IMR-90 (cell line): ENCODE measurements at regions of chr20 and their contacts with region 1.

Region 1: DNA sequence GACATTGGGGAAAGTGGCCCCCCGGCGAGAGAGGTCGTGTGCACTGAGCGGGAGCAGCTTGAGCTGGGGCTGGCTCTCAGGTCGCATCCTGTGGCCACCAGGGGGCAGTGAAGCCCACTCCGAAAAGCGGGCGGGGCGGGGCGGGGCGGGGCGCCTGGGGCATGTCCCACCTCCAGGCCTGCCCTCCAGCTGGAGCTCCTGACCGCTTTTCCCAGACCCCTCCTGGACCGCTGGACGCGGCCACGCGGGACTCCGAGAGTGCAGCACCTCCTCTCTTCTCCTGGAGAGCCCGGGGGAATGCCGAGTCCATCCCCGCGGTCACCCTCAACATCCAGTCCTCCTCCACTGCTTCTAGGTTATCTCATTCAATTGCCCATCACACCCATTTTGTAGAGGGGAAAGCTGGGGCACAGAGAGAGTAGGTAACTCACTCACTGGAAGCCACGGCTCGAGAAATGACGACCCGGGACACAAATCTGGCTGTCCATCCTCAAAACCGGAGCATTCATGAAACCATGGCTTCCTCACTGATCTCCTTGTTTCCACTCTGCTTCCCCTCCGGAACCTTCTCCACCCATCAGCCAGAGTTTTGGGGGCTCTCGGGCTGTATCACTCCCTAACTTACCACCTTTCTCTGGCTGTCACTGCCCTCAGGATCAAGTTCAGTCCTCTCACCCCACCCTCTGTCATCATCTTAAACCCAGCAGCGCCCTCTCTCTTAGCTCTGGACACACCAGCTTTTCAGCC is 24.1 kb downstream of the COX4I2 start:
- DNase-seq: peak; percentile 54
- ATAC-seq: peak; percentile 85
- H3K4me3 ChIP-seq: peak overlapping the region; percentile 43
- H3K27ac ChIP-seq: peak overlapping the region; percentile 56
- H3K4me1 ChIP-seq: peaks cover 17% of the 10 kb centered on the region
- H3K27me3 ChIP-seq: no peaks in the 10 kb centered on the region
- CTCF ChIP-seq: peak; percentile 69
- POLR2A ChIP-seq: no peak
- RAD21 ChIP-seq: peak; percentile 63

Region 2: GRCh38 chr20:31547017-31547675 is 114.7 kb before region 1 on chr20:
- CTCF ChIA-PET with region 1: no interaction called
- POLR2A ChIA-PET with region 1: no interaction called
- dilution Hi-C with region 1: no loop called
- in situ Hi-C with region 1: no loop called
- intact Hi-C with region 1: no loop called
- DNase-seq: peak; percentile 92
- ATAC-seq: peak; percentile 27
- H3K4me3 ChIP-seq: peak overlapping the region; percentile 71
- H3K27ac ChIP-seq: peak overlapping the region; percentile 84
- H3K4me1 ChIP-seq: peaks cover 12% of the 10 kb centered on the region
- H3K27me3 ChIP-seq: no peaks in the 10 kb centered on the region
- CTCF ChIP-seq: no peak
- POLR2A ChIP-seq: peak; percentile 63
- RAD21 ChIP-seq: no peak

Region 3: DNA sequence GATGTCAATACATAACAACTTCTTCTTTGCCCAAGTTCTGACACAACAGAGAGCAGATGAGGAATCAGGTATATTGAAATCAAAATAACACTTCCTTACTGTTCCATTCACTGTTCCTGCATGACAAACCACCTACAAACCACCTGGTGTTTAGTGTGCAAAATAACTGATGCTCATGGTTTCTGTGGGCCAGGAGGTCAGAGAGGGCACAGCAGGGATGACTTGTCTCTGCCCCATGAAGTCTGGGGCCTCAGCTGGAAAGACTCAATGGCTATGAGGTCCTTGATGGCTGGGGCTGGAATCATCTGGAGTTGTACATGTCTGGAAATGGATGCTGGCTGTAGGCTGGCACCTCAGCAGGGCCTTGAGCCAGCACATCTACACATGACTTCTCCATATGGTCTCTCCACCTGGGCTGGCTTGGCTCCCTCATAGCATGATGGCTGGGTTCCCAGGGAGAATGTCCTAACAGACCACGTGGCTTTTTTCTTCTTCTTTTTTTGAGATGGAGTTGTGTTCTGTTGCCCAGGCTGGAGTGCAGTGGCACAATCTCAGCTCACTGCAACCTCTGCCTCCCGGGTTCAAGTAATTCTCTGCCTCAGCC is 31.5 kb before region 1 on chr20:
- CTCF ChIA-PET with region 1: interaction called, 12 read pairs
- POLR2A ChIA-PET with region 1: no interaction called
- dilution Hi-C with region 1: no loop called
- in situ Hi-C with region 1: no loop called
- intact Hi-C with region 1: no loop called
- DNase-seq: no peak
- ATAC-seq: no peak
- H3K4me3 ChIP-seq: no peak overlapping the region
- H3K27ac ChIP-seq: no peak overlapping the region
- H3K4me1 ChIP-seq: peaks cover 11% of the 10 kb centered on the region; the same call in 1 of the 2 replicates
- H3K27me3 ChIP-seq: no peaks in the 10 kb centered on the region
- CTCF ChIP-seq: no peak
- POLR2A ChIP-seq: no peak
- RAD21 ChIP-seq: no peak

Region 4: DNA sequence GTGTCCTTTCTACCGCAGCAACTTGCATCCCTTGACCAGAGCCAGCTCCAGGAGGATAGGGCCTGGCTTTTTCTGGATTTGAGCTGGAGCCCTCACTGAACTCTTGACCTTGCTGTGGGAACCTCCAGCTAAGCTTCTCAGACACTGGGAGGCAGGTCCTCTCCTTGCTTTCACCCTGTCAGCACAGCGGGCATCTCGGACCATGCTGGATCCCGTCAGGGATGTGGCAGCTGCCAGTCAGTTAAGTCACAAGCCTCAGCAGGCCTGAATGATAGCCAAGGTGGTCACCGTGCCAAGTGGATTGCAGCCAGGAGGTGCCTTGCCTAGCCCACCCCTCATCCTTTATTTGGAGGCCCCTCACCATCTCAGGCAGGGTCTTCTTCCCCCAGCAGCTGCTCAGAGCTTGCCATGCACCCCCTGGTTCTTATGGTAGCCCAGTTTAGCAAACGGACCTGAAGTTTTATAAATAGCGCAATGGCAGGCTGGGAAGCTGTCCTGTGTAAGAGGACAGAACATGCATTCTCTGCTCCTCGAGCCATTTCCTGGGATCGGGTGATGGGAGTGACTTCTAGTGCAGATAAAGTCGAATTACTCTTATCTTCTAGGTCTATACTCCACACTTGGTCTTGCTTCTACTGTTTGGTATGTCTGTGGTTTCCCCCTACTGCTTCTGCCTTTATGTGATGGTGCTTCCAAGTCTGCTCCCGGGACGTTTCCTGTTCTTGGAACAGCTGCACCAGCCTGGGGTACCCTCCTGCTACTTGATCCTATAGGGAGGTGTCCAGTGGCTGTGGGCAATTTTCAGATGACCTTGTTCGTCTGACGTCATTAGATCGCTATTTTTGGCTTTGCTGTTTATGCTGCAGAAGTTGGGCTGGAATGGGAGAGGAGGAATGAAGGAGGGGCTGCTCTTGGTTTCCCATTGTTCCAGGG is 150.3 kb after region 1 on chr20:
- CTCF ChIA-PET with region 1: no interaction called
- POLR2A ChIA-PET with region 1: interaction called, 9 read pairs
- dilution Hi-C with region 1: no loop called
- in situ Hi-C with region 1: no loop called
- intact Hi-C with region 1: loop called (anchors 1 kb)
- DNase-seq: peak; percentile 96
- ATAC-seq: peak; percentile 87
- H3K4me3 ChIP-seq: no peak overlapping the region
- H3K27ac ChIP-seq: peak overlapping the region; percentile 11; the same call in 1 of the 2 replicates
- H3K4me1 ChIP-seq: peaks cover 25% of the 10 kb centered on the region
- H3K27me3 ChIP-seq: no peaks in the 10 kb centered on the region
- CTCF ChIP-seq: no peak
- POLR2A ChIP-seq: no peak
- RAD21 ChIP-seq: no peak